CD4-positive, alpha-beta T cell (primary cell): ENCODE measurements at regions of chr2 and their contacts with region 1.

Region 1: GRCh38 chr2:10302479-10303180 is at the start of gene HPCAL1:
- DNase-seq: peak; percentile 60 to 91 (median 80)
- ATAC-seq: peak; percentile 62
- H3K4me3 ChIP-seq: peak within 1 kb of the TSS; percentile 92
- H3K4me3 Mint-ChIP-seq: peak within 1 kb of the TSS; percentile 98
- H3K27ac ChIP-seq: peak within 1 kb of the TSS; percentile 42 to 70
- H3K27ac Mint-ChIP-seq: peak within 1 kb of the TSS; percentile 84
- H3K4me1 ChIP-seq: peaks cover 65% of the 10 kb centered on the region
- H3K4me1 Mint-ChIP-seq: peaks cover 76% of the 10 kb centered on the region
- H3K27me3 ChIP-seq: no peaks in the 10 kb centered on the region
- H3K27me3 Mint-ChIP-seq: no peaks in the 10 kb centered on the region
- CTCF ChIP-seq: peak; percentile 76
- total RNA-seq, gene HPCAL1: 24.9 to 27.9 TPM

Region 2: GRCh38 chr2:8836971-8837794 is 1465.4 kb before region 1 on chr2 and contains the start of gene KIDINS220:
- CTCF ChIA-PET with region 1: no interaction called
- POLR2A ChIA-PET with region 1: no interaction called
- intact Hi-C with region 1: loop called in 1 of 2 experiments (anchors 10 kb)
- DNase-seq: peak; percentile 79 to 93 (median 84)
- ATAC-seq: peak; percentile 96
- H3K4me3 ChIP-seq: peak within 1 kb of the TSS; percentile 89
- H3K4me3 Mint-ChIP-seq: peak within 1 kb of the TSS; percentile 100
- H3K27ac ChIP-seq: peak within 1 kb of the TSS in 1 of 2 donors; percentile 48
- H3K27ac Mint-ChIP-seq: peak within 1 kb of the TSS; percentile 84
- H3K4me1 ChIP-seq: peaks cover 40% of the 10 kb centered on the region
- H3K4me1 Mint-ChIP-seq: peaks cover 49% of the 10 kb centered on the region
- H3K27me3 ChIP-seq: no peaks in the 10 kb centered on the region
- H3K27me3 Mint-ChIP-seq: no peaks in the 10 kb centered on the region
- CTCF ChIP-seq: no peak
- total RNA-seq, gene KIDINS220: 29.3 to 31.4 TPM

Region 3: GRCh38 chr2:10009811-10010292 is 292.8 kb before region 1 on chr2:
- CTCF ChIA-PET with region 1: no interaction called
- POLR2A ChIA-PET with region 1: no interaction called
- intact Hi-C with region 1: no loop called
- DNase-seq: no peak
- ATAC-seq: no peak
- H3K4me3 ChIP-seq: no peak overlapping the region
- H3K4me3 Mint-ChIP-seq: no peak overlapping the region
- H3K27ac ChIP-seq: no peak overlapping the region
- H3K27ac Mint-ChIP-seq: no peak overlapping the region
- H3K4me1 ChIP-seq: no peaks in the 10 kb centered on the region
- H3K4me1 Mint-ChIP-seq: no peaks in the 10 kb centered on the region
- H3K27me3 ChIP-seq: peaks cover 2 to 5% of the 10 kb centered on the region in 2 experiments
- H3K27me3 Mint-ChIP-seq: peaks cover 40% of the 10 kb centered on the region
- CTCF ChIP-seq: no peak

Region 4: DNA sequence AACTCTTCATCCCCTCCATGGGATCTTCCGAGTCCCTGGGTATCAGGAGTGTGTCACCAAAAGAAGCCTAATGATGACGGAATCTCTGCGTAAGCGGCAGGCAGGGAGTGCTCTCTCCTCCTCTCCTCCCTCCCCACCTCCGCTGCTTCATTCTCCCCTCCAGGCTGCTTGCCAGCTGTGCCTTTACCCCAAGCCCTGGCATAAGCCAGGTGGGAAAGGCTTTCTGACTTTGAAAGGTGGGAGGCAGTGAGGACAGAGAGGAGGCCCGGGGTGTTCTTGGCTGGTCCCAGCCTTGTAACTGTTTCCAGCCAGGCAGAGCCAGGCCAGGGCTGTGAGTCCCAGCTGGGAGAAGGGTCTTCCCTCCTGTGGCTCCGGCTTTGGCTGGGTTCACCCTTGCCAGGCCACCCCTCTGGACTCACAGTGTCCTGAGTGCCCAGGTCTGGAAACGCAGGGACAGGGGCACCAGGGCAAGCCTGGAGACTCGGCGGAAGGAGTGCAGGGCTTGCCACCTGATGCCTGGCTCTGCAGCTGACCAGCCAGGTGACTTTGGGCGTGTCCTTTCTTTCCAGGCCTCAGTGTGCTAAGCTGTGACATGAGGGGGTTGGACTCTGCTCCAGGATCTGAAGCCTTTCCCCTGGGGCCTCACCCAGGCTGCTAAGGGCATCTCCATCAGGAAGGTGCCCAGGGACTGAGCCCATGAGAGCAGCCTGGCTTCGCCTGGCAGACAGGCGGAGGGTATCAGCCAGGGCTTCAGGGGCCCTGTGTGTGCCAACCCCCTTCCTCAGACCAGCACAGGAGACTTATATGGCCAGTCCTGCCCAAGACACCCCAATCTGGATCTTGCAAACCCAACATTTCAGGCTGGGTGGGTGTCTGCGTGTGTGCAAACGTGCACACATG is 32.7 kb before region 1 on chr2:
- CTCF ChIA-PET with region 1: no interaction called
- POLR2A ChIA-PET with region 1: no interaction called
- intact Hi-C with region 1: loop called in 1 of 2 experiments (anchors 2 kb)
- DNase-seq: no peak
- ATAC-seq: no peak
- H3K4me3 ChIP-seq: no peak overlapping the region
- H3K4me3 Mint-ChIP-seq: no peak overlapping the region
- H3K27ac ChIP-seq: no peak overlapping the region
- H3K27ac Mint-ChIP-seq: no peak overlapping the region
- H3K4me1 ChIP-seq: peaks cover 10% of the 10 kb centered on the region
- H3K4me1 Mint-ChIP-seq: no peaks in the 10 kb centered on the region
- H3K27me3 ChIP-seq: no peaks in the 10 kb centered on the region
- H3K27me3 Mint-ChIP-seq: no peaks in the 10 kb centered on the region
- CTCF ChIP-seq: no peak

Region 5: GRCh38 chr2:10316336-10316735 is 13.7 kb after region 1 on chr2:
- CTCF ChIA-PET with region 1: interaction called, 10 read pairs
- POLR2A ChIA-PET with region 1: interaction called, 5 read pairs
- intact Hi-C with region 1: no loop called
- DNase-seq: no peak
- ATAC-seq: no peak
- H3K4me3 ChIP-seq: no peak overlapping the region
- H3K4me3 Mint-ChIP-seq: no peak overlapping the region
- H3K27ac ChIP-seq: no peak overlapping the region
- H3K27ac Mint-ChIP-seq: peak overlapping the region; percentile 84
- H3K4me1 ChIP-seq: peaks cover 32% of the 10 kb centered on the region
- H3K4me1 Mint-ChIP-seq: peaks cover 60% of the 10 kb centered on the region
- H3K27me3 ChIP-seq: no peaks in the 10 kb centered on the region
- H3K27me3 Mint-ChIP-seq: no peaks in the 10 kb centered on the region
- CTCF ChIP-seq: no peak

Region 6: GRCh38 chr2:10331027-10331701 is 28.5 kb after region 1 on chr2:
- CTCF ChIA-PET with region 1: interaction called, 70 read pairs
- POLR2A ChIA-PET with region 1: interaction called, 230 read pairs
- intact Hi-C with region 1: loop called (anchors 1 to 2 kb)
- DNase-seq: peak; percentile 54 to 87 (median 74)
- ATAC-seq: peak; percentile 65
- H3K4me3 ChIP-seq: peak overlapping the region; percentile 74
- H3K4me3 Mint-ChIP-seq: peak overlapping the region; percentile 91
- H3K27ac ChIP-seq: peak overlapping the region; percentile 90 to 95
- H3K27ac Mint-ChIP-seq: peak overlapping the region; percentile 94
- H3K4me1 ChIP-seq: peaks cover 77% of the 10 kb centered on the region
- H3K4me1 Mint-ChIP-seq: peaks cover 89% of the 10 kb centered on the region
- H3K27me3 ChIP-seq: no peaks in the 10 kb centered on the region
- H3K27me3 Mint-ChIP-seq: no peaks in the 10 kb centered on the region
- CTCF ChIP-seq: no peak

Region 7: DNA sequence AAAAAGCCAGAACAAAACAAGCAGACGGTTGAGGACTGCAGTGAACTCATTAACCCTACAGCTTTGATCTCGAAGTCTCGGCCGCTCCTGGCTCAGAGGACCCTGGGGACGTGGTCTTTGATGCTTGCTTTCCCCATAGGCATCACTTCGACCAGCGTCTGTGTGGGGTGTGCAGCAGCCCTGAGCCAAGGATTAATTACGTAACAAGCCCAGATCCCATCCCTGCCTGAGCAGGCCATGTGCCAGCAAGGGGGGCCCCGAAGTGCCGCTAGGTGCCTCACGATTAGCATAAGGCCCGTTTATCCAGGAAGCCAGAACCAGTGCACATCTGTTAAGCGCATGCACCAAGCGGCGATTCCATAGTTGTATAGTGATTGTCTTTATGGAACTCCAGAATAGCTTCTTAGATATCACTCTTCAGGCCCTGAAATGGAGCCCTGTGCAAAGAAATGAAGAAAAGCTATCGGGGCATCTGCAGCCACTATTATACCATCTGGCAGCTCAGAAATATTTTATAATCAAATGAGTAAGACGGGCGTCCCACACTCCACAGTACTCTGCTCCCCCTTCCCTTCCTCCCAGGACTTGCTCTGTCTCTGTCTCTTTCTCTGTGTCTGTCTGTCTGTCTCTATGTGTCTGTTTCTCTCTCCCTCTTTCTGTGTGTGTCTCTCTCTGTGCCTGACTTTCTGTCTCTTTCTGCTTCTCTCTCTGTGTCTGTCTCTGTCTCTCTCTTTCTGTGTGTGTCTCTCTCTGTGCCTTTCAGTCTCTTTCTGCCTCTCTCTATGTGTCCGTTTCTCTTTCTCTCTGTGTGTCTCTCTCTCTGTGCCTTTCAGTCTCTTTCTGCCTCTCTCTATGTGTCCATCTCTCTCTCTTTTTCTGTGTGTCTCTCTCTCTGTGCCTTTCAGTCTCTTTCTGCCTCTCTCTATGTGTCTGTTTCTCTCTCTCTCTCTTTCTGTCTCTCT is 41.8 kb after region 1 on chr2:
- CTCF ChIA-PET with region 1: no interaction called
- POLR2A ChIA-PET with region 1: no interaction called
- intact Hi-C with region 1: no loop called
- DNase-seq: no peak
- ATAC-seq: no peak
- H3K4me3 ChIP-seq: no peak overlapping the region
- H3K4me3 Mint-ChIP-seq: peak overlapping the region; percentile 3
- H3K27ac ChIP-seq: no peak overlapping the region
- H3K27ac Mint-ChIP-seq: peak overlapping the region; percentile 48
- H3K4me1 ChIP-seq: peaks cover 79% of the 10 kb centered on the region
- H3K4me1 Mint-ChIP-seq: peaks cover 83% of the 10 kb centered on the region
- H3K27me3 ChIP-seq: no peaks in the 10 kb centered on the region
- H3K27me3 Mint-ChIP-seq: no peaks in the 10 kb centered on the region
- CTCF ChIP-seq: no peak

Region 8: GRCh38 chr2:10382354-10383061 is 79.9 kb after region 1 on chr2:
- CTCF ChIA-PET with region 1: interaction called, 4 read pairs
- POLR2A ChIA-PET with region 1: interaction called, 25 read pairs
- intact Hi-C with region 1: loop called in 1 of 2 experiments (anchors 1 kb)
- DNase-seq: peak; percentile 13 to 81 (median 34)
- ATAC-seq: peak; percentile 94
- H3K4me3 ChIP-seq: peak overlapping the region; percentile 46
- H3K4me3 Mint-ChIP-seq: peak overlapping the region; percentile 82
- H3K27ac ChIP-seq: peak overlapping the region; percentile 23 to 59
- H3K27ac Mint-ChIP-seq: peak overlapping the region; percentile 96
- H3K4me1 ChIP-seq: peaks cover 96% of the 10 kb centered on the region
- H3K4me1 Mint-ChIP-seq: peaks cover 93% of the 10 kb centered on the region
- H3K27me3 ChIP-seq: no peaks in the 10 kb centered on the region
- H3K27me3 Mint-ChIP-seq: no peaks in the 10 kb centered on the region
- CTCF ChIP-seq: no peak